Ovary (tissue), 10 donors: ENCODE measurements at regions of chr2 and their contacts with region 1.

Region 1: DNA sequence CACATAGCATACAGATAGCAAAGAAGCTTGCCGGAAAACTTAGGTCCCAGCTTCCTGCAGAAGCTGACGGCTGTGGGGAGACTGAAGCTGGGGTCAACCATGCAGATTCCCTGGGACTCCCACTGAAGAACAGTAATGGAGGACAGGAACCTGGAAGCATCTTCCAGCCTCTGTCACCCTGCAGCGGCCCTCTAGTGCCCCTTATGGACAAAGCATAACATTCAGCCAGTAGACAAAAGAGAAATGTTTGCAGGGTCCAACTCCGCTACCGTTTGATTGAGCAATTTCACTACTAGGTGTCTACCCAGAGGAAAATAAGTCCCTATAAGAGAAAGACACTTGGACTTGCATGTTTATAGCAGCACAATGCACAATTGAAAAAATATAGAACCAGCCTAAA is 460.6 kb downstream of the CNTNAP5 start:
- DNase-seq: no peak
- H3K4me3 ChIP-seq: no peak overlapping the region
- H3K27ac ChIP-seq: no peak overlapping the region
- H3K4me1 ChIP-seq: no peaks in the 10 kb centered on the region
- H3K27me3 ChIP-seq: no peaks in the 10 kb centered on the region
- CTCF ChIP-seq: no peak
- EP300 ChIP-seq: no peak
- POLR2A ChIP-seq: no peak

Region 2: DNA sequence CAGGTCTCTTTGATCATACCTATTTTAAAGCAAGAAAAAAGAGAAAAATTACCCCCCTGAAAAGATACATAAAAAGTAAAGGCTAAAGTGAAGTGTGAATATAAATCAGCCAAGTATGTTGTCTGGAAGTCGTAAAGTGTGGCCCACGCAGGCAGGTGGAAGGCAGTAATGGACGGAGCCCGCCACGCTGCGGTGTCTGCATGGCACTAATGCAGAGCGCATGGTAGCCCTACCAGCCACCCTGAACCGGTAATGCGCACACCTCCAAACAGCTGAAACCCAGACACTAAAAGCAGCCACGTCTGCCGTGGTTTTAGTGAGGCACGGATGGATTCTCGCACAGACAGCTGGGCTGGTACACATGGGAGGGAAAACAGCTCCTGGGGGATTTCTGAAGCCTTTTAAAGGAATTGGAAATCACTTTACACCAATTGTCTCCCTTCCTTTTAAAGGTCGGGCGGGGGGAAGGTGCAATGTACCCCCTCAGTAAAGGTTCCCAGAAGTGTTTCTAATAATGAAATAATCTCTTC is 154.6 kb after region 1 on chr2:
- intact Hi-C with region 1: no loop called
- DNase-seq: no peak
- H3K4me3 ChIP-seq: no peak overlapping the region
- H3K27ac ChIP-seq: no peak overlapping the region
- H3K4me1 ChIP-seq: no peaks in the 10 kb centered on the region
- H3K27me3 ChIP-seq: no peaks in the 10 kb centered on the region
- CTCF ChIP-seq: no peak
- EP300 ChIP-seq: no peak
- POLR2A ChIP-seq: no peak

Region 3: DNA sequence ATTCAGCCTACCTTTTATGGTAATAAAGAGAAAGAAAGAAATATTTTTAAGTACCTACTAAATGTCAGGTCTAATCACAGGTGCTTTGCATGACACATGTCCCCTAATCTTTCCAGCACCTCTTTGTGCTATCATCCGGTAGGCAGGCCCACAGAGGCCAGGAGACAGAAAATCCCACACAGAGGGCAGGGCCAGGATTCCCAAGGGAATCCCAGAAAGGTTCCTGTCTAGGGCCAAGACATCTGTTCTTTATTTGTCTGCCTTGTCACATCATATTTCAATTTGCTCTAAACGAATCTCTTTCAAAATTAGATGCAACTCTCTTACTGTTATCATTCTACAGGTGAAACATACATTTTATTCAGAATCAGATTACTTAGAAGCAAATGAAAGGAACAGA is 1494.2 kb after region 1 on chr2:
- intact Hi-C with region 1: loop called in 1 of 4 experiments (anchors 5 kb)
- DNase-seq: no peak
- H3K4me3 ChIP-seq: no peak overlapping the region
- H3K27ac ChIP-seq: no peak overlapping the region
- H3K4me1 ChIP-seq: no peaks in the 10 kb centered on the region
- H3K27me3 ChIP-seq: no peaks in the 10 kb centered on the region
- CTCF ChIP-seq: no peak
- EP300 ChIP-seq: no peak
- POLR2A ChIP-seq: no peak